HCT116 (cell line): ENCODE measurements at regions of chr1 and their contacts with region 1.

Region 1: GRCh38 chr1:210311726-210312493 is 16.8 kb upstream of the HHAT start:
- DNase-seq: no peak
- ATAC-seq: no peak
- H3K4me3 ChIP-seq: no peak overlapping the region; a peak in 1 of 4 replicates
- H3K27ac ChIP-seq: no peak overlapping the region
- H3K4me1 ChIP-seq: peaks cover 0 to 10% of the 10 kb centered on the region in 2 experiments; a peak in 2 of 4 replicates
- H3K27me3 ChIP-seq: no peaks in the 10 kb centered on the region
- CTCF ChIP-seq: no peak
- POLR2A ChIP-seq: no peak
- RAD21 ChIP-seq: no peak

Region 2: GRCh38 chr1:209860293-209860881 is 451.5 kb before region 1 on chr1:
- CTCF ChIA-PET with region 1: no interaction called
- POLR2A ChIA-PET with region 1: no interaction called
- RAD21 ChIA-PET with region 1: interaction called in 1 of 2 experiments, 4 read pairs
- intact Hi-C with region 1: loop called (anchors 2 kb)
- DNase-seq: peak; percentile 73
- ATAC-seq: peak; percentile 95
- H3K4me3 ChIP-seq: no peak overlapping the region
- H3K27ac ChIP-seq: no peak overlapping the region
- H3K4me1 ChIP-seq: peaks cover 0 to 14% of the 10 kb centered on the region in 2 experiments; a peak in 2 of 4 replicates
- H3K27me3 ChIP-seq: no peaks in the 10 kb centered on the region
- CTCF ChIP-seq: peak; percentile 82 to 83 (median 83)
- POLR2A ChIP-seq: no peak
- RAD21 ChIP-seq: peak; percentile 87

Region 3: DNA sequence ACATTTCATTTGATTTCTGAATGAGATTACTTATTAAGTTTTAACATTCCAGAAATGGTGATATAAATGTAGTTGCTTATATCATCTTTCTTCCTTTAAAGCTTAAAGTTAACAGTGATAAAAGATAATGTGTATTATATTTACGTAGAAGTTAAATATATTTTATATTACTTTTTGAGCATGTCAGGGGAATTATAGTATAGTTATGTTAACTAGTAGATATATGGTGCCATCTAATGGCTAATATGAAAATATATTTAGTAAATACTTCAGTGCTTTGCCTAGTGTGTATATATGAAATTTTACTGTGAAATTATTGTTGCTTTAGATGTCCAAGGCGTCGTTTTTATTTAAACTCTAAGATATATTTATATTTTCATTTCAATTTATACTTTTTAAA is 322.4 kb before region 1 on chr1:
- CTCF ChIA-PET with region 1: no interaction called
- POLR2A ChIA-PET with region 1: no interaction called
- RAD21 ChIA-PET with region 1: no interaction called
- intact Hi-C with region 1: loop called (anchors 5 kb)
- DNase-seq: no peak
- ATAC-seq: peak; percentile 76
- H3K4me3 ChIP-seq: no peak overlapping the region
- H3K27ac ChIP-seq: no peak overlapping the region
- H3K4me1 ChIP-seq: no peaks in the 10 kb centered on the region
- H3K27me3 ChIP-seq: peaks cover 29% of the 10 kb centered on the region
- CTCF ChIP-seq: peak in 1 of 3 experiments; percentile 57; a peak in 2 of 6 replicates
- POLR2A ChIP-seq: no peak
- RAD21 ChIP-seq: peak; percentile 63

Region 4: GRCh38 chr1:210143465-210144062 is 168.3 kb before region 1 on chr1:
- CTCF ChIA-PET with region 1: interaction called, 15 read pairs
- POLR2A ChIA-PET with region 1: interaction called, 4 read pairs
- RAD21 ChIA-PET with region 1: interaction called, 3 read pairs
- intact Hi-C with region 1: loop called (anchors 1 kb)
- DNase-seq: peak; percentile 58
- ATAC-seq: peak; percentile 69
- H3K4me3 ChIP-seq: no peak overlapping the region
- H3K27ac ChIP-seq: no peak overlapping the region
- H3K4me1 ChIP-seq: no peaks in the 10 kb centered on the region
- H3K27me3 ChIP-seq: peaks cover 19% of the 10 kb centered on the region
- CTCF ChIP-seq: peak; percentile 55 to 75 (median 70); a peak in 4 of 6 replicates
- POLR2A ChIP-seq: no peak
- RAD21 ChIP-seq: peak; percentile 80

Region 5: DNA sequence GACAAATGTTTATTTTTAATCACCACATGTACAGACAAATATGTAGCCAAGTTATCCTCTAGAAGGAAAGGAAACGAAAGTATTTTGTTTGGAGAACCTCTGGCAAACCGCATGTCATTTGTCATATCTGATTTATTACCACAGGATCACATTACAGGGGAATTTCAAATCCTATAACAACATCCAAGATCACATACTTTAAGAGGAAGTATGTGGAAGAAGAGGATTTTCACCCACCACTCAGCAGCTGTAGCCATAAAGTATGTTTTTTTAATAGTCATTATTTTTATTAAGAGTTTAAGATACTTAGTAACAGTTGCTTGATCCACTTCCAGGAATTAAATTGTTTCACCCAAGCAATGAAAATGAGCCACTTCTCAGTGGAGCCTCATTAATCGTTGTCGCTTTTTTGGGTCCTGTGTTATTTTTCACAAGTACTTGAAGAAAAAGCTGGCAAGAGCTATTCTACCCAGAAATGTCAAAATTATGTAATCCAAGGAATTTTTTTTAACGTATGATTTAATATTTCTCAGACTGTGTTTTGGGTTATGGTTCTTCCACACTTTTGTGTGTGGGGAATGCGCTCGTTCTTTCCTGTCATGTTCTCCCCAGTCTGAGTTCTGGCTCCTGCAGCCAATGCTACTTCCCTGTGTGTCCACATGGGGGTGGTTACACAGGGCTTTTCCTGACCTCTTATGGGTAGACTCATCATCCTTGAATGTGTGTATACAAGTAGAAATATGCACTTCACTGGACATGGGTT is 72.4 kb before region 1 on chr1:
- CTCF ChIA-PET with region 1: no interaction called
- POLR2A ChIA-PET with region 1: no interaction called
- RAD21 ChIA-PET with region 1: no interaction called
- intact Hi-C with region 1: loop called (anchors 2 kb)
- DNase-seq: peak; percentile 28
- ATAC-seq: peak; percentile 98
- H3K4me3 ChIP-seq: no peak overlapping the region
- H3K27ac ChIP-seq: no peak overlapping the region
- H3K4me1 ChIP-seq: peaks cover 4 to 8% of the 10 kb centered on the region in 2 experiments; a peak in 3 of 4 replicates
- H3K27me3 ChIP-seq: peaks cover 41% of the 10 kb centered on the region
- CTCF ChIP-seq: peak; percentile 15 to 71 (median 61); a peak in 5 of 6 replicates
- POLR2A ChIP-seq: no peak
- RAD21 ChIP-seq: peak; percentile 33; the same call in 1 of the 2 replicates

Region 6: DNA sequence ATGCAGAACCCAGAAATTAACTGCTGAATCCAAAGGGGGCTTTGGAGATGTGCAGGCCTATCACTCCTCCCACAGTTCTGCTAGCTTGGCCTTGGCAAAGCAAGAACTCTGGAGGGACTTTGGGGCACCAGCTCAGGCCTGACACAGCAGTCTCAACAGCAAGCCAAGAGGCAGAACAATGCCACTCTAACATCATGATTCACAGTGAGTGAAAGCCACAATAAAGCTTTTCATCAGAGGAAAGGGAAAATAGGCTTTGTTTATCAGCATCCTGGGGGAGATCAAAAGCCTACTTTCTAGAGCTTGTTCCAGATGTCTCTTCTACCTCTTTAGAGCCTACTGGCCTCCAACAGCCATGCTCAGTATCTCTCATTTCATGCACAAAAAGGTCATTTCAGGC is 538.6 kb after region 1 on chr1:
- CTCF ChIA-PET with region 1: no interaction called
- POLR2A ChIA-PET with region 1: no interaction called
- RAD21 ChIA-PET with region 1: no interaction called
- intact Hi-C with region 1: no loop called
- DNase-seq: no peak
- ATAC-seq: no peak
- H3K4me3 ChIP-seq: no peak overlapping the region
- H3K27ac ChIP-seq: no peak overlapping the region
- H3K4me1 ChIP-seq: no peaks in the 10 kb centered on the region
- H3K27me3 ChIP-seq: no peaks in the 10 kb centered on the region
- CTCF ChIP-seq: no peak
- POLR2A ChIP-seq: no peak
- RAD21 ChIP-seq: no peak